ENCODE measurements at regions of chr6 and their contacts with region 1.

Region 1: DNA sequence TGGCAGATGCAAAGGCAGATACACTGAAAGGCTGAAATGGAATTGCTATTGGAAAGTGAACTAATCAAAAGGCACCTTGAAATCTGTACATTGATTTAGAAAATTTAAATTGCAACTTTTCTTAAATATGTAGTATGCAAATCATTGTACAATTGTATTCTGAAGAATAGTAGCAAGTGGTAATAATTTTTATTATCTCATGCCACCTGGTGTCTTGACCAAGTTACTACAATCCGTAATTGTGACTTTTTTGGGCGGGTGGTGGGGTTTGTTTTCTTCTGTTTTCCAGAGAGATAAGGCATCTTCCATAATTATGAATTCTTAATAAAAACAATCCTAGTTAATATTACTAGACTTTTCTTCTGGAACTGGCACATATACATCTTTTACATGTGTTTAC is 12.5 kb upstream of the BCKDHB start:
- DNase-seq: peak; percentile 21
- ATAC-seq: peak; percentile 70
- H3K4me3 ChIP-seq: no peak overlapping the region
- H3K27ac ChIP-seq: no peak overlapping the region
- H3K4me1 ChIP-seq: no peaks in the 10 kb centered on the region
- H3K27me3 ChIP-seq: 0 out of 2 replicates have a peak, but pooled peaks cover under 1% of the 10 kb centered on the region
- CTCF ChIP-seq: peak; percentile 60
- POLR2A ChIP-seq: no peak
- RAD21 ChIP-seq: peak; percentile 57

Region 2: DNA sequence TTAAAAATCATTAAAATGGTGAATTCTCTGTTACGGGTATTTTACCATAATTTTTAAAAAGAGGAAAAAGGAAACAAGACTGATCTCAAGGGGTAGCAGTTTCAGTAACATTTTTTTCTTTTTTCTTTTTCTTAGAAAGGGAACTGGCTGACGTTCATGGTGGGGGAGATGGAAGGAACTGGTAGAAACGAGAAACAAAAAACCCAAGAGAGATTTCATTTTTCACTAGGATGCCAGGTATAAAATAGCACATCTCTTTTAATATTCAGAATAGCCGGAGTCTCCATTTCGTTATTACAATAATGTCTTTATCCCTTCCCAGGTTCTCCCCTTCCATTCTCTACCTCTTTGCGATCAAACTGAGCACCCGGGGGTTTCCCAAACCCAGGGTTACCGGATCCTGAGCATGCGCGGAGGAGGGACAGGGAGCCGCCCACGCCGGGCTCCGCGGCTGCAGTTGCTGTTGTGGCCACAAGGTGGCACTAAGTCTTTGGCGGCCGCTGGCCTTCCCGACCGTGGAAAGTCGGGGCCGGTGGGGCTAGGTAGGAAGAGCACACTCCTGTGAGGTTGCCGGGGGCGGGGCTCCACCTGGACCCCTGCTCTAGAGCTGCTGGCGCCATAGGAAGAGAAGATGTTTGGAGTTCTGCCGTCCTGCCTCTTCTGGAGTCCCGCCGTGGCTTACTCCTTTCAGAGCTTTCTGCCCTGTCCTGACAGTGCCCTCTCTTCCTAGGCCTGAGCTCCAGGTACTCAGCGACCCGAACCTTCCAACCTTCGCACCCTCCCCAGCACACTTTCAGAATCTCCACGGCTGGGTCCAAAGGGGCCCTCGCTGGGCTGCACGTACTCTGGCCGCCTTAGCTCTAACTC is 316.1 kb before region 1 on chr6:
- CTCF ChIA-PET with region 1: no interaction called
- POLR2A ChIA-PET with region 1: no interaction called
- dilution Hi-C with region 1: no loop called
- in situ Hi-C with region 1: no loop called
- intact Hi-C with region 1: loop called (anchors 1 kb)
- DNase-seq: peak; percentile 47
- ATAC-seq: peak; percentile 99
- H3K4me3 ChIP-seq: peak overlapping the region; percentile 33
- H3K27ac ChIP-seq: no peak overlapping the region
- H3K4me1 ChIP-seq: no peaks in the 10 kb centered on the region
- H3K27me3 ChIP-seq: peaks cover 5% of the 10 kb centered on the region
- CTCF ChIP-seq: peak; percentile 97
- POLR2A ChIP-seq: no peak
- RAD21 ChIP-seq: peak; percentile 62

Region 3: DNA sequence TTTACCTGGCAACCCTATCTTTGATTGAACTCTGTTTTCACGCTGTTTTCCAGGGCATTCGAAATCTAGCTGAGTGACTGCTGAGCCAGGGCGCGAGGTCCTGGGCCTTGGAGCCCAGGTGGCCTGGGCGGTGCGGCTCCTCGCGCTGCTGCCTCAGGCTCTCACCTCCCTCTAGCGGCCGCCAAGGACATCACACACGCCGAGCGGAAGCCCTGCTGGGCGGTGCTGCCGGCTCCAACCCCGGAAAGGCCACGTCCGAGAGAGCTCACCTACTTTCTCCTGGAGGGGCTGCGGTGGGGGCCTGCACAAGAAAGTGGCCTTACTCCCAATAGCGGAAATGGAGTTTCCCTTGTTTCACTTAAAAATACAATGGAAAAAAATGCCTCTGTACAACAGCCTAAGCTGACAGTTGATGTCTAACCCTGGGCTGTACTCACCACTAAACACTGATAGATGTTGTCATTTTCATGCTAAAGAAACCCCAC is 224.4 kb before region 1 on chr6:
- CTCF ChIA-PET with region 1: no interaction called
- POLR2A ChIA-PET with region 1: no interaction called
- dilution Hi-C with region 1: no loop called
- in situ Hi-C with region 1: no loop called
- intact Hi-C with region 1: loop called (anchors 5 kb)
- DNase-seq: peak; percentile 57
- ATAC-seq: peak; percentile 100
- H3K4me3 ChIP-seq: no peak overlapping the region
- H3K27ac ChIP-seq: no peak overlapping the region
- H3K4me1 ChIP-seq: no peaks in the 10 kb centered on the region
- H3K27me3 ChIP-seq: peaks cover under 1% of the 10 kb centered on the region
- CTCF ChIP-seq: peak; percentile 79
- POLR2A ChIP-seq: no peak
- RAD21 ChIP-seq: peak; percentile 37

Region 4: GRCh38 chr6:79949233-79949632 is 144.8 kb before region 1 on chr6:
- CTCF ChIA-PET with region 1: interaction called, 5 read pairs
- POLR2A ChIA-PET with region 1: no interaction called
- dilution Hi-C with region 1: loop called (anchors 25 kb)
- in situ Hi-C with region 1: no loop called
- intact Hi-C with region 1: loop called (anchors 1 kb)
- DNase-seq: peak; percentile 75
- ATAC-seq: no peak
- H3K4me3 ChIP-seq: no peak overlapping the region
- H3K27ac ChIP-seq: no peak overlapping the region
- H3K4me1 ChIP-seq: no peaks in the 10 kb centered on the region; the same call in 1 of the 2 replicates
- H3K27me3 ChIP-seq: no peaks in the 10 kb centered on the region
- CTCF ChIP-seq: peak; percentile 64
- POLR2A ChIP-seq: no peak
- RAD21 ChIP-seq: peak; percentile 56

Region 5: DNA sequence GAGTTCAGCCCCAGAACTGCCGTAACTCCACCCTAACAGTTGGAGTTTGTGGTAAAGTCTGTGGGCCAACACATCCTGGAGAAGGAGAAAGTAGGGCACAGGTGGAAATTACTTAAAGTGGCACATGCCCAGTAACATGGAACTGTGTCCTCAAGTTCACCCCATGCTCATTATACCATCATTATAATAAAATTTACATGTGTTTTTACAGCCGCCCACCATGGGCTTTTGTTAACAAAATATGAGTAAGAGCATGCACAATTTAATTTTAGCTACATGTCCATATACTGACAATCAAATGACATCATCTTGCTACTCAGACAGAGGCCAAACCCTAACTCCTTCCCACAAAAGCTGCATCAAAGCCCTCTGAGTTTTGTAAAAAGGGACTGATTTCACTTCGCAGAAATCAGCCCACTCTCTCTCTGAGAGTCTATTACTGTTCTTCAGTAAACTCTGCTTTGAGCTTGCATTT is 129.4 kb before region 1 on chr6:
- CTCF ChIA-PET with region 1: no interaction called
- POLR2A ChIA-PET with region 1: no interaction called
- dilution Hi-C with region 1: loop called (anchors 25 kb)
- in situ Hi-C with region 1: no loop called
- intact Hi-C with region 1: no loop called
- DNase-seq: no peak
- ATAC-seq: no peak
- H3K4me3 ChIP-seq: no peak overlapping the region
- H3K27ac ChIP-seq: no peak overlapping the region
- H3K4me1 ChIP-seq: no peaks in the 10 kb centered on the region
- H3K27me3 ChIP-seq: no peaks in the 10 kb centered on the region
- CTCF ChIP-seq: no peak
- POLR2A ChIP-seq: no peak
- RAD21 ChIP-seq: no peak

Region 6: GRCh38 chr6:80254716-80255115 is 160.7 kb after region 1 on chr6:
- CTCF ChIA-PET with region 1: no interaction called
- POLR2A ChIA-PET with region 1: no interaction called
- dilution Hi-C with region 1: no loop called
- in situ Hi-C with region 1: no loop called
- intact Hi-C with region 1: no loop called
- DNase-seq: no peak
- ATAC-seq: no peak
- H3K4me3 ChIP-seq: no peak overlapping the region
- H3K27ac ChIP-seq: no peak overlapping the region
- H3K4me1 ChIP-seq: peaks cover 2% of the 10 kb centered on the region; the same call in 1 of the 2 replicates
- H3K27me3 ChIP-seq: no peaks in the 10 kb centered on the region
- CTCF ChIP-seq: no peak
- POLR2A ChIP-seq: no peak
- RAD21 ChIP-seq: no peak